HepG2 (cell line): ENCODE measurements at regions of chr1 and their contacts with region 1.

Region 1: DNA sequence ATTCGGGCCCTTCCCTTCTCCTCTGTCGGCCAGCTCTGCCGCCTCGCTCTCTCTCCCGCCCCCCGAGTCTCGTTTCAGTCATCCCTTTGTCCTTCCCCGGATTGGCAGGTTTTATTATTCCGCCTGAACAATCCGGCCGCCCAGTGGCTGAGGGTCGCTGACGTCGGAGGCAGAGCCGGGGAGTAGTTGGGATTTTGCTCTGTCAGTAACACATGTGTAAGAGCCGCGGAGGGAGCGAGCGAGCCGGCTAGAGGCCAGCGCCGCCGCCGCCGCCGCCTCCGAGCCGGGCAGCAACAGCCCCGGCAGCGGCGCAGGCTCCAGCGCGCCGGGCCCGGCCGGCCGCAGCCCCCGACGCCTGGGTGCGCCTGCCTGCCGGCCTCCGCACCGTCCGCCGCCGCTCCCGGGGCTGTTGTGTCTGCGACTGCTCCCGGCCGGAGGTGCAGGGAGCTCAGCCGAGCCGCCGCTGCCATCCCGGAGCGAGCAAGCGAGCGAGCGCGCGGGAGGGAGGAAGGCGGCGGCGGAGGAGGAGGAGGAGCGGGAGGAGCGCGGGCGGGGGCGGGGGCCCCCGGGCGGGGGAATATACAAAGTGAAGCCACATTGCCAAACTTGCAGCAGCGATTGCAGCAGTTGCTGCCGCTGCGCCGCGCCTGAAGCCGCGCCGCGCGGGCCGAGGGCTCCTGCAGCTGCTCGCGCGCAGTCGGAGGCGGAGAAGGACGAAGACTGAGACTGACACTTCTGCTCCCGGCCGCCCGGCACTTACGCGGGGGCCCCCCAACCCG is at the start of gene LMO4:
- DNase-seq: peak; percentile 93
- ATAC-seq: peak; percentile 85
- H3K4me3 ChIP-seq: peak within 1 kb of the TSS; percentile 80 to 96 (median 87)
- H3K27ac ChIP-seq: peak within 1 kb of the TSS; percentile 87
- H3K4me1 ChIP-seq: peaks cover 28% of the 10 kb centered on the region
- H3K27me3 ChIP-seq: peaks cover 0 to 6% of the 10 kb centered on the region in 2 experiments; a peak in 2 of 5 replicates
- CTCF ChIP-seq: no peak
- EP300 ChIP-seq: no peak
- POLR2A ChIP-seq: peak; percentile 59 to 84
- RAD21 ChIP-seq: peak; percentile 23; the same call in 1 of the 2 replicates
- total RNA-seq, gene LMO4: 18.2 and 19.3 TPM in 2 replicates

Region 2: GRCh38 chr1:87226341-87226760 is 102.1 kb before region 1 on chr1:
- CTCF ChIA-PET with region 1: no interaction called
- POLR2A ChIA-PET with region 1: no interaction called
- in situ Hi-C with region 1: no loop called
- intact Hi-C with region 1: loop called (anchors 5 kb)
- DNase-seq: peak; percentile 74
- ATAC-seq: peak; percentile 98
- H3K4me3 ChIP-seq: peak overlapping the region in 1 of 3 experiments; percentile 22; a peak in 2 of 6 replicates
- H3K27ac ChIP-seq: no peak overlapping the region
- H3K4me1 ChIP-seq: peaks cover 17% of the 10 kb centered on the region
- H3K27me3 ChIP-seq: no peaks in the 10 kb centered on the region
- CTCF ChIP-seq: no peak
- EP300 ChIP-seq: 0 out of 4 replicates have a peak, but pooled peaks of 1 of the 2 experiments have one; percentile 21
- POLR2A ChIP-seq: no peak
- RAD21 ChIP-seq: no peak

Region 3: DNA sequence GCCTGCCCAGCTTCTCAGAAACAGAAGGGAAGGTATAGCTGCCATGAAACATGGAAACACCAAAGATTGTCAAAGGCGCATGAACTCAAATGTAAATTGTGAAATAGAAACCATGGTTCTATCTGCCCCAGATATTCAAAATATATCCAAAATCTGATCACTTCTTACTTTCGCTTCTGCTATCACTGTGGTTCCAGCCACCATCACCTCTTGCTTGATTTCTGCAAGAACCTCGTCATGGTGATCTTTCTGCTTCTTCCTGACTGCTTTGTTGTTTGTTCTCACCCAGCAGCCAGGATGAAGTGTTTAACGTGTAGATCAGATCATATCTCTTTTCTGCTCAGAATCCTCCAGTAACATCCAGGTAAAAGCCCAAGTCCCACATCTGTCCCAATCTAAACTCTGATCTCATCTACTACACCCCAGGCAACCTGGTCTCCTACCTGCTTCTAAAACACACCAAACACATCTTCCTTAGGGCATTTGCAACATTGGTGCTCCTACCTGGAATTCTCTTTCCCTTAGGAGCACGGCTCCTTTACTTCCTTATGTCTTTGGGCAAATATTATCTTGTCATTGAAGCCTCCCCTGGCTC is 10.3 kb before region 1 on chr1:
- CTCF ChIA-PET with region 1: no interaction called
- POLR2A ChIA-PET with region 1: no interaction called
- in situ Hi-C with region 1: no loop called
- intact Hi-C with region 1: no loop called
- DNase-seq: no peak
- ATAC-seq: no peak
- H3K4me3 ChIP-seq: no peak overlapping the region
- H3K27ac ChIP-seq: no peak overlapping the region
- H3K4me1 ChIP-seq: no peaks in the 10 kb centered on the region
- H3K27me3 ChIP-seq: peaks cover 0 to 12% of the 10 kb centered on the region in 2 experiments; a peak in 2 of 5 replicates
- CTCF ChIP-seq: no peak
- EP300 ChIP-seq: no peak
- POLR2A ChIP-seq: no peak
- RAD21 ChIP-seq: no peak

Region 4: GRCh38 chr1:87787551-87787950 is 459.1 kb after region 1 on chr1:
- CTCF ChIA-PET with region 1: no interaction called
- POLR2A ChIA-PET with region 1: no interaction called
- in situ Hi-C with region 1: loop called (anchors 10 kb)
- intact Hi-C with region 1: loop called (anchors 5 kb)
- DNase-seq: peak; percentile 69
- ATAC-seq: peak; percentile 89
- H3K4me3 ChIP-seq: peak overlapping the region in 2 of 3 experiments; percentile 8 to 11; a peak in 1 of 6 replicates
- H3K27ac ChIP-seq: peak overlapping the region; percentile 48
- H3K4me1 ChIP-seq: peaks cover 42% of the 10 kb centered on the region
- H3K27me3 ChIP-seq: no peaks in the 10 kb centered on the region
- CTCF ChIP-seq: peak; percentile 49
- EP300 ChIP-seq: no peak
- POLR2A ChIP-seq: no peak
- RAD21 ChIP-seq: no peak; the same call in 1 of the 2 replicates

Region 5: DNA sequence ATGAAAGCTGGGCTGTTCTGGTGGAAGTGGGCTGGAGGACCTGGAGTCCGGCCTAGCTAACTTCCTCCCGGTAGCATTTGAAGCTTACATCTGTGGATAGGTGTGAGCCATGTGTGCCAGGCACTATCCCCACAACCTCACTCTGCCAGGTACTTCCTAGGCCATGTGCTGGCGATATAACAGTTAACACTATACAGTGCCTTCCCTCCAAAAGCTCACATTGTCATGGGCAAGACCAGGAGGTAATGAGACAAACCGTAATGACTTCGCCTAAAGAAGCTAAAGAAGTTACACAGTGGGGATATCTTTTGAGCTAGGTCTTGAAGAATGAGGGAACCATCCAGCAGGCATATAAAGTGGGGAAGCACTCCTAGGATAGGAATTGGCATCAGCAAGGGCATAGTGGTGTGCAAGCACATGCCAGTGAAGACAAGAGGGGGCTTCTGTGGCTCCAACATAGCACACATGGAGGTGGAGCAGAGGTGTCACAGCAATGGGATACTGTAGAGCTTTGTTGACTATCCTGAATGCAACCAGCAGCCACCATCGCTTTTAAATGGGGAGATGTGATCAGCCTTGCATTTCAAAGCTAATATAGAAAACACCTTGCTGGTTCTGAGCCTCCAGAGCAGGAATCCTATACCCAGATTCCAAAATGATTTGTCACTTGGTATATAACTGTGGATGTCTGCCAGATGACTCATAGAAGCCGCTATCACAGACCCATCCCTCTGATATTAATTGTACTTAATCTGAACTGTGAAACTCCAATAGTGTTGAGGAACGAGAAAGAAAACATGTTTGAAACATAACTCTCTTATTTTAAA is 466.5 kb after region 1 on chr1:
- CTCF ChIA-PET with region 1: no interaction called
- POLR2A ChIA-PET with region 1: interaction called, 14 read pairs
- in situ Hi-C with region 1: loop called (anchors 10 kb)
- intact Hi-C with region 1: no loop called
- DNase-seq: peak; percentile 86
- ATAC-seq: peak; percentile 82
- H3K4me3 ChIP-seq: peak overlapping the region in 1 of 3 experiments; percentile 43; a peak in 1 of 6 replicates
- H3K27ac ChIP-seq: peak overlapping the region; percentile 90
- H3K4me1 ChIP-seq: peaks cover 50% of the 10 kb centered on the region
- H3K27me3 ChIP-seq: no peaks in the 10 kb centered on the region
- CTCF ChIP-seq: no peak
- EP300 ChIP-seq: peak in 1 of 2 experiments; percentile 56; a peak in 2 of 4 replicates
- POLR2A ChIP-seq: no peak
- RAD21 ChIP-seq: no peak